Ascending aorta (tissue), 2 donors: ENCODE measurements at regions of chr10 and their contacts with region 1.

Region 1: GRCh38 chr10:51291961-51292360 is 217.7 kb downstream of the PRKG1 start:
- DNase-seq: no peak
- H3K4me3 ChIP-seq: no peak overlapping the region
- H3K27ac ChIP-seq: peak overlapping the region; percentile 64 to 72
- H3K4me1 ChIP-seq: peaks cover 0 to 17% of the 10 kb centered on the region in 2 donors
- H3K27me3 ChIP-seq: no peaks in the 10 kb centered on the region
- CTCF ChIP-seq: no peak

Region 2: GRCh38 chr10:50857579-50857978 is 434.4 kb before region 1 on chr10:
- intact Hi-C with region 1: no loop called
- DNase-seq: no peak
- H3K4me3 ChIP-seq: no peak overlapping the region
- H3K27ac ChIP-seq: no peak overlapping the region
- H3K4me1 ChIP-seq: no peaks in the 10 kb centered on the region
- H3K27me3 ChIP-seq: no peaks in the 10 kb centered on the region
- CTCF ChIP-seq: no peak

Region 3: DNA sequence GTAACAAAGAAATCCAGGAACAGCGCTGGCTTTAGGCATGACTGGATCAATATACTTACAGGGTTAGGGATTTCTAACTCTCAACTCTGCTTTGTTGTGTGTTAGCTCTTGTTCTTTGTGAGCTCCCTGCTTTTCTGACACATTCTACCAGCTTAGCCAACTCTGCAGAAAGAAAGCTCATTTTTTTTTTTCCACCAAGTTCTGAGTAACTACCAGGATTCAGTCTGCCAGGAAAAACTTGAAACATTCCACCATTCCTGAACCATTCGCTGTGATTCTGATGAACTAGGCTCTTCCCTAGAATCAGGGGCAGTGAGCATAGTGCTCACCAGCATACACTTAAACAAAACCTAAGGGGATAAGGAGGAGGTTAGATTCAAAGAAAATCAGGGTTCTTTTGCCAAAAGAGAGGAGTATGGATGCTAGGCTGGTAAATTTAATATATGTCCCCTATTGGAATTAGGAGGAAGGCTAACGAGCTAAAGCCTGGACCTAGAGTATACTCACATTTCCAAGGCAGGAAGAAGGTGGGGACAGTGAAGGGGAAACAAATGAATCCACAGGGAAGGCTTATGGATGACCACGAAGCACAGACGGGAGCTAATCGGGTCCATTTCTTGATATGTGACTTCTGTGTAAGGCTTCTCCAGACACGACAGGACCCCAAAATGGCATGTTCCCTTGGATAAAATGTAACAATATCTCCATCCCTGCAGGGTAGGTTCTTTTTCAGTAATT is 34.3 kb before region 1 on chr10:
- intact Hi-C with region 1: loop called (anchors 5 kb)
- DNase-seq: no peak
- H3K4me3 ChIP-seq: peak overlapping the region in 1 of 2 donors; percentile 5
- H3K27ac ChIP-seq: peak overlapping the region; percentile 77 to 81
- H3K4me1 ChIP-seq: peaks cover 0 to 41% of the 10 kb centered on the region in 2 donors
- H3K27me3 ChIP-seq: no peaks in the 10 kb centered on the region
- CTCF ChIP-seq: no peak